Heart left ventricle (tissue), 16 donors: ENCODE measurements at regions of chr12 and their contacts with region 1.

Region 1: DNA sequence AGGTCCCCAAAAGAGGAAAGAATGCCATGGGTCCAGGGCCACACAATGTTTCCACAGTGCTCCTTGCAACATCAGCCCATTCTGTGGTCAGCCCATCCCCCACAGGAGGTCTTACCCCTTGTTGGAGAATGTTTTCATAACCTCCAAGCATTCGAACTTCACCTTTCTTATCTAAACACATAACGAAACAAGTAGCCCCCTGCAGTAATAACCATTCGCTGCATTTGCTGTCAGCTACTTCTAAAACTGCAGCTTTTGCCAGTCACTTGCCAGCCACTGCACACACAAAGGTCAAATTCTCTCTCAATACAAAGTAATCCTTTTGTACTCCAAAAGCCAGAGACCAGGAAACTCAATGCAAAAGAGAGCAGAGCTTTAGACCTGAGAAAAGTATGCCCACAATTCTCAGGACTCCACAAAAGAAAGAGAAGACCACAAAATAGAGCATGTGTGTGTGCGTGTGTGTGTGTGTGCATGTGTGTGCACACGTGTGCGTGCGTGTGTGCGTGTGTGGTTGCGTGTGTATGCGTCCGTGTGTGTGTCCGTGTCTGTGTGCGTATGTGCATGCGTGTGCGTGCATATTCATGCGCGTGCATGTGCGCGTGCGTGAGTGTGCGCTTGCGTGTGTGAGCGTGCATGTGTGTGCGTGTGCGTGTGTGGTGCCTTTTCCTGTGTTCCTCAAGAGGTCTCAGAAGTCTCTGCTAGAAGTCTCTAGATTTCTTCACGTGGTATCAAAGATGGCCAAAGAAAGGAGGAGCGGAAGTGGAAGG is 31.7 kb upstream of the NINJ2 start:
- DNase-seq: no peak
- ATAC-seq: no peak
- H3K4me3 ChIP-seq: no peak overlapping the region
- H3K27ac ChIP-seq: no peak overlapping the region
- H3K4me1 ChIP-seq: peaks cover 0 to 9% (median 0%) of the 10 kb centered on the region in 12 donors
- H3K27me3 ChIP-seq: no peaks in the 10 kb centered on the region
- CTCF ChIP-seq: no peak
- POLR2A ChIP-seq: no peak

Region 2: DNA sequence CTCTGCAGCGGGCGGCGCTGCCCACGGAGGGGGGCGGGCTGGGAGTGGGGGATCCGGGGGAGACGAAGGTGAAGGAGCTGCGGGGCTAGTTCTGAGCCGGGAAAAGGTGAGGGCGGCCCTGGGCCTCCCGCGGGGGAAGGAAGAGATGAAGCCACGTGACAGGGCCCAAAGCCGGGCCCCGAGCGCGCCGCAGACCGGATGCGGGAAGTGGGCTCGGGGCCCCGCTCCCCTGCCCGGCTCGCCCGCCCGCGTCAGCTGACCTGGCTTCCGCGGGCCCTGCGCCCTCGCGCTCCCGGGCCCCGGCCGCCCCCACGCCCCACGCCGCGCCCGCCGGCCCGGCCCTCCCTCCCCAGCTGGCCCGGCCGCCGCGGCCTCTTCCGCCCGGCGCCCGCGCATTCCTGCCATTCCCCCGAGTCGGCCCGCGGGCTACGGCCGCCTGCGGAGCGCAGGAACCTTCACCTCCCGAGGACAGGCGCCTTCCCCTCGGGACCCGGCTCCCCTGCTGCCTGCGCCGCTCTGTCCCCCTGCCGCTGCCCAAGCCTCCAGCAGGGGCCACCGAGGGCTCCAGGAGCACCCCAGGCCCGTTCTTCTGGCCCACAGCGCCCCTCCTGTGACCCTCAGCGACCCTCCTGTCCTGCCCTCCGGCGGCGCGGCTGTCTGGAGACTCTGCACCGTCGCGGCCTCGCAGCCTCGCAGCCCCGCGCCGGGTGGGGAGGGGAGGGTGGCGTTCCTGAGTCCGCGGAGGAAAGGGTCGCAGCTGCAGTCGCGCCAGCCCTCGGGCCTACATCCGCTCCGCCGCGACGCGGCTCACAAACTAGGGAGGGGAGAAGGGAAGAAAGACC is 52.1 kb before region 1 on chr12:
- intact Hi-C with region 1: no loop called
- DNase-seq: peak; percentile 83 to 93 (median 88)
- ATAC-seq: peak; percentile 9 to 78 (median 66)
- H3K4me3 ChIP-seq: peak overlapping the region; percentile 43 to 86 (median 74)
- H3K27ac ChIP-seq: peak overlapping the region; percentile 93 to 100 (median 99)
- H3K4me1 ChIP-seq: peaks cover 7 to 91% (median 54%) of the 10 kb centered on the region in 12 donors
- H3K27me3 ChIP-seq: no peaks in the 10 kb centered on the region
- CTCF ChIP-seq: peak in 11 of 12 donors; percentile 9 to 51 (median 34)
- POLR2A ChIP-seq: peak in 1 of 2 donors; percentile 28

Region 3: DNA sequence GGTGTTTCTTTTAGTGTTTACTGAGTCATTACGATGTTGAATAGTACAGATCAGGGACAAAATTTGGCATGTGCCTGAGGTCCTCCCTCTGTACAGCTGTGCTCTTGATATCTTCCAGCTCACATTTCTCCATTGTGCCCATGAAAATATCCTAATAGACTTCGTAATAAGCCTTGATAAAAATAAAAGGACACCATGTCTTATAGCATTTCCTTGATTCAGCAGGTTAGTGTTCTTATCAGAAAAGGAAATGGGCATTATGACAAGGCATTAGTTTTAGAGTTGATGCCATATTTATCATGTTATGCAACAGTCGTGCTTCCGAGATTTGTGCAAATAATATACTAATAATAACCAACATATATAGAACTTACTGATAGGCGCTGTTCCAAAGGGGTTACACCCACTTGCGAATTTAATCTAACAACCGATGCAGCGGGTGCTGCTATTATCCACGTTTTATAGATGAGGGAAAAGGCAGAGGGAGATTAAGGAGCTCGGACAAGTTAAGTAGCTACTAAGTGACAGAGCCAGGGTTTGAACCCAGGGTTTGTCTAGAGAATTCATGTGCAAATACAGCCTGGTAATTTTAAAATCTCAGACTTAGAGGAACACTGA is 42.3 kb after region 1 on chr12:
- intact Hi-C with region 1: loop called in 1 of 10 experiments (anchors 5 kb)
- DNase-seq: no peak
- ATAC-seq: peak; percentile 28 to 88 (median 66)
- H3K4me3 ChIP-seq: no peak overlapping the region
- H3K27ac ChIP-seq: peak overlapping the region in 4 of 12 donors; percentile 7 to 58 (median 21)
- H3K4me1 ChIP-seq: peaks cover 0 to 20% (median 9%) of the 10 kb centered on the region in 12 donors
- H3K27me3 ChIP-seq: no peaks in the 10 kb centered on the region
- CTCF ChIP-seq: no peak
- POLR2A ChIP-seq: no peak